Tibial artery (tissue), 4 donors: ENCODE measurements at regions of chr1 and their contacts with region 1.

Region 1: GRCh38 chr1:8238851-8239305 is 79.0 kb upstream of the SLC45A1 start:
- DNase-seq: peak; percentile 66 to 77
- H3K4me3 ChIP-seq: no peak overlapping the region
- H3K27ac ChIP-seq: peak overlapping the region in 1 of 2 donors; percentile 15
- H3K4me1 ChIP-seq: peaks cover 0 to 13% (median 8%) of the 10 kb centered on the region in 4 donors
- H3K27me3 ChIP-seq: no peaks in the 10 kb centered on the region
- CTCF ChIP-seq: peak; percentile 28 to 32

Region 2: DNA sequence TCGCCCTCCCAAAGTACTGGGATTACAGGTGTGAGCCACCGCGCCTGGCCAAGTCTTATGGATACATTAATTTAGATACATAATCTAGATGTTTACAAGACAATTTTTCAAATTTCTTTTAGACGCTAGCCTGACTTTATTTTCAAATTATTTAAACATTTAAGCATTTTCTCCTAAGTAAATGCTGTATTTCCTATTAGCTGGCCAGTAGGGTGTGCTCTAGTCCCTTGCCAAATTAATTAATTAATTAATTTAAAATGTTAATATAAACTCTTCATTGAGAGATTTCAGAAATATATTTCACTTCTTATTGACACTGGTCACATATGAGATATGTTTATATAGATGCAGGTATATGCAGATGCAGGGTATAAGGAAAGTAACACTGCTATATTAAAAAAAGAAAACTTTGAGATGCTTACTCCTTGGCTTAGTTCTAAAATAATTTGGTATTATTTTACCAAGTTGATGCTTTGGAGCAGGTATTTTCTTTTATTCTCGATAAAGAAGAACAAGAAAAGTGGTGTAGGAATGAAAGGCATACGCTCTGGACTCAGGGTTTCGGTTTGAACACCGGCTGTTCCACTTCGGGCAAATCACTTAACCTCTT is 207.6 kb before region 1 on chr1:
- intact Hi-C with region 1: loop called (anchors 10 kb)
- DNase-seq: no peak
- H3K4me3 ChIP-seq: no peak overlapping the region
- H3K27ac ChIP-seq: peak overlapping the region in 1 of 2 donors; percentile 27
- H3K4me1 ChIP-seq: peaks cover 0 to 35% (median 26%) of the 10 kb centered on the region in 4 donors
- H3K27me3 ChIP-seq: no peaks in the 10 kb centered on the region
- CTCF ChIP-seq: peak; percentile 66 to 79

Region 3: GRCh38 chr1:8121261-8122170 is 117.4 kb before region 1 on chr1:
- intact Hi-C with region 1: no loop called
- DNase-seq: peak; percentile 87 to 91
- H3K4me3 ChIP-seq: peak overlapping the region; percentile 20 to 30
- H3K27ac ChIP-seq: peak overlapping the region; percentile 90 to 91
- H3K4me1 ChIP-seq: peaks cover 0 to 83% (median 64%) of the 10 kb centered on the region in 4 donors
- H3K27me3 ChIP-seq: no peaks in the 10 kb centered on the region
- CTCF ChIP-seq: no peak